Kidney (tissue), 22 donors: ENCODE measurements at regions of chr4 and their contacts with region 1.

Region 1: GRCh38 chr4:112222219-112222955 is 9.2 kb upstream of the AP1AR start:
- DNase-seq: no peak
- H3K4me3 ChIP-seq: no peak overlapping the region
- H3K27ac ChIP-seq: no peak overlapping the region
- H3K4me1 ChIP-seq: no peaks in the 10 kb centered on the region
- H3K27me3 ChIP-seq: no peaks in the 10 kb centered on the region
- CTCF ChIP-seq: no peak

Region 2: DNA sequence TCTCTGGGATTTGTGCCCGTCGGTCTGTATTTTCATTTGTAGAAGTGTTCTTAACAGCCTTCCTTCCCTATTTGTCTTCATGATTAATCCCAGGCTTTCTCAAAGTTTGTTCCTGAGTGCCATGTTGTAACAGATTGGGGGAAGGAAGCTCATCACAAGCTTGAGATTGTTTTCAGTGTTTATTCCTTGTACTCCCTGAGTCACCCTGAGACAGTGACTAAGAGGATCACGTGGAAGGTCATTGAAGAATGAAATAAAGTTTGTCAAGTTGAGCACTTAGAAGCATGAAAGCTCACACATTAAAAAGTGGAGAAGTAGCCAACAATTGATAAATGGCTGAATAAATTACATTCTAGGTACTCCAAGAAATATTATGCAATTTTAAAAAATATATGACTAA is 230.6 kb before region 1 on chr4:
- intact Hi-C with region 1: no loop called
- DNase-seq: peak in 1 of 5 donors; percentile 20
- H3K4me3 ChIP-seq: no peak overlapping the region
- H3K27ac ChIP-seq: no peak overlapping the region
- H3K4me1 ChIP-seq: no peaks in the 10 kb centered on the region
- H3K27me3 ChIP-seq: no peaks in the 10 kb centered on the region
- CTCF ChIP-seq: no peak

Region 3: DNA sequence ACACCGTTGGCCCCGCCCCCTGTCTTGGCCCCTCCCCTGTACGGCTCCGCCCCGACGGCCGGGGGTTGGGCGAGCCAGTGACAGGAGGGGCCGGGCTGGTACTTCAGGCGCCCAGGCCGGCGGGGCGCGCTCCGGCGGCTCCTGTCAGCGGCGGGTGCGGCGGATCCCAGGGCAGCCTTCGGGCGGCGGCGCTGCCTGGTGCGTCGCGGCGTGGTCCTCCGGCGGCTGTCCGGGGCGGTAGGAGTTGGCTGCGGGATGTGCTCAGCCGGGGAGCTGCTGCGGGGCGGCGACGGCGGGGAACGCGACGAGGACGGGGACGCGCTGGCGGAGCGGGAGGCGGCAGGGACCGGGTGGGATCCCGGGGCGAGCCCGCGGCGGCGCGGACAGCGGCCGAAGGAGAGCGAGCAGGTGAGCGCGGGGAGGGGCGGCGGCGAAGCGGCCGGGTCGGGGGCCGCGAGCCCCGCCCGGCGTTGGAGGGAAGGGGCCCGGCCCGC is 77.0 kb before region 1 on chr4 and contains the start of gene FAM241A:
- intact Hi-C with region 1: loop called (anchors 10 kb)
- DNase-seq: peak; percentile 86 to 96 (median 89)
- H3K4me3 ChIP-seq: peak within 1 kb of the TSS; percentile 61 to 96 (median 93)
- H3K27ac ChIP-seq: peak within 1 kb of the TSS; percentile 85 to 88
- H3K4me1 ChIP-seq: peaks cover 0 to 4% (median 2%) of the 10 kb centered on the region in 3 donors
- H3K27me3 ChIP-seq: no peaks in the 10 kb centered on the region
- CTCF ChIP-seq: no peak
- total RNA-seq, gene FAM241A: 2.9 TPM